PC-3 (cell line): ENCODE measurements at regions of chrX and their contacts with region 1.

Region 1: GRCh38 chrX:70133303-70134115 is at the start of gene IGBP1:
- DNase-seq: peak; percentile 80
- ATAC-seq: peak; percentile 78
- H3K4me3 ChIP-seq: peak within 1 kb of the TSS; percentile 93
- H3K27ac ChIP-seq: peak within 1 kb of the TSS; percentile 82
- H3K4me1 ChIP-seq: peaks cover 41% of the 10 kb centered on the region
- H3K27me3 ChIP-seq: no peaks in the 10 kb centered on the region
- CTCF ChIP-seq: peak; percentile 76
- total RNA-seq, gene IGBP1: 43.0 and 51.1 TPM in 2 replicates

Region 2: GRCh38 chrX:69932323-69932722 is 201.2 kb before region 1 on chrX:
- CTCF ChIA-PET with region 1: no interaction called
- POLR2A ChIA-PET with region 1: no interaction called
- intact Hi-C with region 1: no loop called
- DNase-seq: no peak
- ATAC-seq: no peak
- H3K4me3 ChIP-seq: no peak overlapping the region
- H3K27ac ChIP-seq: no peak overlapping the region
- H3K4me1 ChIP-seq: no peaks in the 10 kb centered on the region
- H3K27me3 ChIP-seq: no peaks in the 10 kb centered on the region
- CTCF ChIP-seq: no peak

Region 3: DNA sequence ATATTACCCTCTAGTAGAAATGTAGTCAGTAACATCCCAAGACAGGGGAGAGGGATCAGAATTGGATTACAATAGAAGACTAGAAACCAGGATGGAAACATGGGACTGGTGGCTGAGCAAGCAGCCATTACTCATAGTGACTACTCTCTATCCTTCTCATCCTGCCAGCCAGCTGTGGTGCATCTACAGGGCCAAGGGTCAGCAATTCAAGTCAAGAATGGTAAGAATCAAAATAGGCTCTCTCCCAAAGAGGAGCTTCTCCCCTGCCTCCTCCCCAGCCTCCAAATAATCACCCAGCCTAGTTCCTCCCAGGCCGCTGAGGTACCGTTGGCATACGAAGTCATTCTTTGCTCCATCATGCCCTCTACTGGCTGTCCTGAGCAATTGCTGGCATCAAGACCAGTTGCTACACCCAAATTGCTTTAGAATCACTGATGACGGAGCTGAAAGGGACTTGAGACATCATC is 103.2 kb before region 1 on chrX:
- CTCF ChIA-PET with region 1: interaction called, 4 read pairs
- POLR2A ChIA-PET with region 1: interaction called, 12 read pairs
- intact Hi-C with region 1: no loop called
- DNase-seq: peak; percentile 69
- ATAC-seq: peak; percentile 50
- H3K4me3 ChIP-seq: no peak overlapping the region
- H3K27ac ChIP-seq: no peak overlapping the region
- H3K4me1 ChIP-seq: no peaks in the 10 kb centered on the region
- H3K27me3 ChIP-seq: no peaks in the 10 kb centered on the region
- CTCF ChIP-seq: peak; percentile 82

Region 4: GRCh38 chrX:70168238-70169188 is 35.0 kb after region 1 on chrX:
- CTCF ChIA-PET with region 1: interaction called, 10 read pairs
- POLR2A ChIA-PET with region 1: no interaction called
- intact Hi-C with region 1: no loop called
- DNase-seq: peak; percentile 75
- ATAC-seq: peak; percentile 67
- H3K4me3 ChIP-seq: peak overlapping the region; percentile 44; the same call in 1 of the 2 replicates
- H3K27ac ChIP-seq: peak overlapping the region; percentile 75
- H3K4me1 ChIP-seq: peaks cover 41% of the 10 kb centered on the region
- H3K27me3 ChIP-seq: no peaks in the 10 kb centered on the region
- CTCF ChIP-seq: no peak

Region 5: GRCh38 chrX:70176938-70177533 is 43.5 kb after region 1 on chrX and contains the start of gene DGAT2L6:
- CTCF ChIA-PET with region 1: interaction called, 4 read pairs
- POLR2A ChIA-PET with region 1: interaction called, 13 read pairs
- intact Hi-C with region 1: loop called (anchors 2 kb)
- DNase-seq: no peak
- ATAC-seq: no peak
- H3K4me3 ChIP-seq: no peak within 1 kb of the TSS
- H3K27ac ChIP-seq: no peak within 1 kb of the TSS
- H3K4me1 ChIP-seq: peaks cover 33% of the 10 kb centered on the region
- H3K27me3 ChIP-seq: no peaks in the 10 kb centered on the region
- CTCF ChIP-seq: no peak
- total RNA-seq, gene DGAT2L6: not detected in 2 replicates

Region 6: GRCh38 chrX:70244881-70245280 is 111.4 kb after region 1 on chrX:
- CTCF ChIA-PET with region 1: no interaction called
- POLR2A ChIA-PET with region 1: no interaction called
- intact Hi-C with region 1: no loop called
- DNase-seq: no peak
- ATAC-seq: no peak
- H3K4me3 ChIP-seq: no peak overlapping the region
- H3K27ac ChIP-seq: no peak overlapping the region
- H3K4me1 ChIP-seq: peaks cover 16% of the 10 kb centered on the region
- H3K27me3 ChIP-seq: no peaks in the 10 kb centered on the region
- CTCF ChIP-seq: no peak

Region 7: GRCh38 chrX:70262952-70263567 is 129.6 kb after region 1 on chrX:
- CTCF ChIA-PET with region 1: interaction called, 6 read pairs
- POLR2A ChIA-PET with region 1: interaction called, 8 read pairs
- intact Hi-C with region 1: loop called (anchors 1 kb)
- DNase-seq: peak; percentile 80
- ATAC-seq: peak; percentile 92
- H3K4me3 ChIP-seq: no peak overlapping the region
- H3K27ac ChIP-seq: no peak overlapping the region
- H3K4me1 ChIP-seq: no peaks in the 10 kb centered on the region
- H3K27me3 ChIP-seq: no peaks in the 10 kb centered on the region
- CTCF ChIP-seq: peak; percentile 80

Region 8: DNA sequence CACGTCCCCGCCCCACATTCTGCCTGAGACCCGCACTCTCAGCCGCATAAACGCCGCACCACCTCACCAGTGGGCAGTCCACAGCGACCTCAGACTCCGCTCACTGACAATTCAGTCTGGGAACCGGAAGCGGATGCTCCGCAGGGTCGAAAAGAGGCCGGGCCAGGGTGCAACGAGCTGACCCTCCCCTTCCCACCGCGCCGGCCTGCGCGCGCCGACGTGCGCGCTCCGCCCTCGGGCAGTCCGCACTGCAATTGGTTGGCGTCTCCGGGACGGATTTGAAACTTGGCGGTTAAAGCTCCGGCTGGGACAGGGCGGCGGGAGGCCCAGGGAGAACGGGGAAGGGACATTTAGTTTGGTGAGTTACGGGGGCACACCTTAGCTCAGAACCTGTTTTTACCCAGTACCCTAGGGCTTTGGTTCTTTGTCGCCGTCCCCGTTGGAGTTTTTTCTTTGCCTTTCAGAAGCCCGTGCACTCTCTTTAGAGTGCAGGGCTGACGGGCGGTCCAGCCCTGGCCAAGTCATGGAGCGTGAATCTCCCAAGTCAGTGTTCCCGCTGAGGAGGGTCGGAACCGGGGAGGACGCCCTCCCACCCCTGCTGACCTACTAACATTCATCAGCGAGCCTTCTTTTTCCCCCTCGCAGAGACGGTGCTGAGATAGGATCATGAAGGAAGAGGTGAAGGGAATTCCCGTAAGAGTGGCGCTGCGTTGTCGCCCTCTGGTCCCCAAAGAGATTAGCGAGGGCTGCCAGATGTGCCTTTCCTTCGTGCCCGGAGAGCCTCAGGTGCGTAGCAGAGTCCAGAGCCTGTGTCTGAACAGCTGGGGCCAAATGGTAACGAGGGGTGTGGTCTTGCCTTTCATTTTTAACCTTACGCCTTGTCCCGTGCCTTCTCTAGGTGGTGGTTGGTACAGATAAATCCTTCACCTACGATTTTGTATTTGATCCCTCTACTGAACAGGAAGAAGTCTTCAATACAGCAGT is 156.6 kb after region 1 on chrX and contains the starts of genes KIF4A and PDZD11:
- CTCF ChIA-PET with region 1: interaction called, 8 read pairs
- POLR2A ChIA-PET with region 1: interaction called, 3 read pairs
- intact Hi-C with region 1: loop called (anchors 10 kb)
- DNase-seq: peak; percentile 88
- ATAC-seq: peak; percentile 93
- H3K4me3 ChIP-seq: peak within 1 kb of the TSS; percentile 93
- H3K27ac ChIP-seq: peak within 1 kb of the TSS; percentile 52
- H3K4me1 ChIP-seq: peaks cover 23% of the 10 kb centered on the region
- H3K27me3 ChIP-seq: no peaks in the 10 kb centered on the region
- CTCF ChIP-seq: no peak
- total RNA-seq, gene KIF4A: 35.8 and 43.5 TPM in 2 replicates
- total RNA-seq, gene PDZD11: 69.5 and 83.0 TPM in 2 replicates

Region 9: GRCh38 chrX:70324326-70324725 is 190.8 kb after region 1 on chrX:
- CTCF ChIA-PET with region 1: no interaction called
- POLR2A ChIA-PET with region 1: no interaction called
- intact Hi-C with region 1: no loop called
- DNase-seq: no peak
- ATAC-seq: no peak
- H3K4me3 ChIP-seq: no peak overlapping the region
- H3K27ac ChIP-seq: no peak overlapping the region
- H3K4me1 ChIP-seq: no peaks in the 10 kb centered on the region
- H3K27me3 ChIP-seq: no peaks in the 10 kb centered on the region
- CTCF ChIP-seq: no peak

Region 10: GRCh38 chrX:70433848-70434351 is 300.4 kb after region 1 on chrX:
- CTCF ChIA-PET with region 1: interaction called, 6 read pairs
- POLR2A ChIA-PET with region 1: interaction called, 5 read pairs
- intact Hi-C with region 1: loop called (anchors 2 kb)
- DNase-seq: peak; percentile 64
- ATAC-seq: peak; percentile 66
- H3K4me3 ChIP-seq: peak overlapping the region; percentile 93
- H3K27ac ChIP-seq: 0 out of 2 replicates have a peak overlapping the region, but pooled peaks have one; percentile 37
- H3K4me1 ChIP-seq: peaks cover 22% of the 10 kb centered on the region
- H3K27me3 ChIP-seq: no peaks in the 10 kb centered on the region
- CTCF ChIP-seq: peak; percentile 72

Region 11: GRCh38 chrX:71652405-71652804 is 1518.9 kb after region 1 on chrX:
- CTCF ChIA-PET with region 1: no interaction called
- POLR2A ChIA-PET with region 1: no interaction called
- intact Hi-C with region 1: no loop called
- DNase-seq: peak; percentile 72
- ATAC-seq: peak; percentile 55
- H3K4me3 ChIP-seq: no peak overlapping the region
- H3K27ac ChIP-seq: no peak overlapping the region
- H3K4me1 ChIP-seq: no peaks in the 10 kb centered on the region
- H3K27me3 ChIP-seq: no peaks in the 10 kb centered on the region
- CTCF ChIP-seq: peak; percentile 69